Calu3 (cell line): ENCODE measurements at regions of chr20 and their contacts with region 1.

Region 1: GRCh38 chr20:31788578-31788977 is 30.6 kb upstream of the MYLK2 start:
- DNase-seq: peak; percentile 22
- H3K4me3 Mint-ChIP-seq: no peak overlapping the region
- H3K27ac Mint-ChIP-seq: no peak overlapping the region
- H3K4me1 Mint-ChIP-seq: no peaks in the 10 kb centered on the region
- H3K27me3 Mint-ChIP-seq: no peaks in the 10 kb centered on the region
- CTCF ChIP-seq: no peak

Region 2: DNA sequence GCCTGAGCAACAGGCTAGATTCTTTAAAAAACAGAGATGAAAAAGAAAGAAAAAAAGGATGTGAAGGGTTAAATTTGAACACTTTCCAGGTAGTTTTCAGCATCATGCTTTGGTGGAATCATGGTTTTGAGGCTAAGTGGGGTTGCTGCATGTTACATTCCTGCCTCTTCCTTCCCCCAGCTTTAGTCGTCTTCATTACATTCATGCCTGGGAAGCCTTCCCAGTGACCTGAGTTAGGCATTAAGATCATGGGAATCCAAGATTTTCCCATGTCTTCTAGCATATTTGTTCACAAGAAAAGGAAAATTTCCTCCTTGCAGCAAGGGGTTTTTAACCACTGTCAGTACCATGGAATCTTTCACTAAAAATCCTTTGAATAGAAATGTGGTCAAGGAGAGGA is 37.5 kb before region 1 on chr20:
- CTCF ChIA-PET with region 1: no interaction called
- intact Hi-C with region 1: loop called (anchors 5 kb)
- DNase-seq: no peak
- H3K4me3 Mint-ChIP-seq: no peak overlapping the region
- H3K27ac Mint-ChIP-seq: no peak overlapping the region
- H3K4me1 Mint-ChIP-seq: peaks cover 10% of the 10 kb centered on the region
- H3K27me3 Mint-ChIP-seq: no peaks in the 10 kb centered on the region
- CTCF ChIP-seq: no peak